ENCODE measurements at regions of chr1 and their contacts with region 1.

Region 1: DNA sequence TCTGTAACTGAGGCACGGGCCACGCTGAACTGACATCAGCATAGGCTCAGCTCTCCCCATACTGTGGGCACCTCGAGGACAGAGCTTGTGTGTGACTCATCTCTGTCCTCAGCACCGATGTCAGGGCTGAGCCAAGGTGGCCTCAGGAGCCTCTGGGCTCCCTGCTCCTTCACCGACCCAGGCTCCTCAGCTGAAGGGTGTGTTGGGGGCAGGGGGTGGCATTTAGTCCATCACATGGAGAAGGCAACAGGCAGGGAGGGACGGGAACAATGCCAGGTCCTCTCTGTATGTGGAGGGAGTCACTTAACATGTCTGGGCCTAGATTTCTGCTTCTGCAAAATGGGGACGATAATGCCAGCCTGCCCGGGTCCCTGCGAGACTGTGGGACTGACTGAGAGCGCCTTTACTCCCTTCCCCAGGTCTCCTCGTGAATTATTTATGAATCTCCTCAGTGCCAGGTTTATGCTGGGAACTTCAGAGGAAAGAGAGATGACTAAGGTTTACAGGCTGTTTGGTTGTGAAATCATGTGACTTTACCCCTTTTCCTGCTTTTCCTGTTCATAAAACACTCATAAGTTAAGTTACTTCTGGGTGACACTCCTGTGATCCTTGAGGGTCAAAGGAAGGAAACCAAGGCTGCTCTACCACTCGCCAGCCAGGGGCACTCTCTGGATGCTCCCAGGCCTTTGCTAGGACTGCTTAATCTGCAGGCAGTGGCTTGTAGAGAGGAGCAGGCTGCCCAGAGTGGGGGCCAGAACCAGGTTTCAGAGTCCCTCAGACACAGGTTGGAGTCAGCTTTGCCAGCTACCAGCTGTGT is 16.2 kb downstream of the TTC39A start:
- DNase-seq: no peak
- ATAC-seq: no peak
- H3K4me3 Mint-ChIP-seq: no peak overlapping the region
- H3K27ac Mint-ChIP-seq: no peak overlapping the region
- H3K4me1 Mint-ChIP-seq: peaks cover 10% of the 10 kb centered on the region
- H3K27me3 Mint-ChIP-seq: no peaks in the 10 kb centered on the region; the same call in 1 of the 2 replicates
- CTCF ChIP-seq: no peak

Region 2: DNA sequence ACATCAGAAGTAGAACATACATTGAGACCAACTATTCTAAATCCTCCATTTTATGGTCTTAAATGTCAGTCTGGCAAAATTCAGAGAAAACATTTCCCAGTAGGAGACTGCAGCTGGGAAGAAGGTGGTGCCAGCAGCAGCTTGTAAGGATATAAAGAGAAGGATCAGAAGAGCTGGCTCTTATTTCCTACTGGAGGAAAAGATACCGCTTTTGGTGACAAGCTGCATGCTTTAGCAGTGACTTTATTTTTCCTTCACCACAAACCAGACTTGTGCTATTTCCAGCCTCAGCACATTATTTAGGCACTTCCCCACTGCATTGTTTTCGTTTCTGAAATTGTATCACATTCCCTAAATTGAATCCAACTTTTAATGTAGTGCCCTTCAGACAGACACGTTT is 49.7 kb before region 1 on chr1:
- CTCF ChIA-PET with region 1: no interaction called
- POLR2A ChIA-PET with region 1: no interaction called
- DNase-seq: no peak
- ATAC-seq: no peak
- H3K4me3 Mint-ChIP-seq: no peak overlapping the region
- H3K27ac Mint-ChIP-seq: peak overlapping the region; percentile 92
- H3K4me1 Mint-ChIP-seq: peaks cover 24% of the 10 kb centered on the region
- H3K27me3 Mint-ChIP-seq: no peaks in the 10 kb centered on the region
- CTCF ChIP-seq: no peak

Region 3: DNA sequence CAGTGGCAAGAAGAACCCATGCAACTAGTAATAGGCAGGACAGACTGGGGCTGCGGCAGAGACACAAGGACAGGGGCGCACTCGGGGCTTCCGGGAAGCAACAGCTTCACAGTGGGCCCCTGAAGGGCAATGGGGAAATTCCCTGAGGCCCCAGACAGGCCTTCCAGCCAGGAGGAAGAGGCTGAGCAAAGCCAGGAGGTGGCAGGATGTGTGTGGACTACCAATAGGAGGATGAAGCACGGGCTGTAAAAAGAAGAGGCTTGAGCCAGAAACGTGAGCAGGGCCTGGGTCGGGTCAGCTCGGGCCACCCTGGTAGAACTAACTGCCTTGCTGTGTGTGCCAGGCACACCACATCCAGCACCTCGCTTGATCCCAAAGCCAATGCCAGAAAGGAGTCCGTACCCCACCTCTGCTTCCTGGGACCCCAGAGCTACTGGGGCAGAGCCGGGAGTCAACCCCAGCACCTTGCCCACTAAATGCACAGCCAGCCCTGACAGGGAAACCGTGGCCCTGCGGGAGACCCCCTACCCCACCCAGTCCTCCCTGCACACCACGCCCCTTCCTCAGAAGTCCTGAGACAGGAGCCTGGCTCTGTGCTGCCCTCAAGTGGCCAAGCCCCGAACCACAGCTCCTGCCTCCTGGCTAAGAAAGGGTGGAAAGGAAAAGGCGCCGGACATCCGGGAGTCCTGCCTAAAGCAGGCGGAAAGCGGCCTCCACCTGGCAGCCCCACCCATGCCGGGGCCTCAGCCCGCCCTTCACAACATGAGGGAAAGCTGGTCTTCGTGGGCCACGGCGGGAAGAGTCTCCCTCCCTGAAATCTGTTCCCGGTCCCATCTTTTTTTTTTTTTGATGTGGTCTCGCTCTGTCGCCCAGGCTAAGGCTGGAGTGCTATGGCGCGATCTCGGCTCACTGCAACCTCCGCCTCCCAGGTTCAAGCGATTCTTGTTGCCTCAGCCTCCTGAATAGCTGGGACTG is 17.5 kb before region 1 on chr1:
- CTCF ChIA-PET with region 1: interaction called, 10 read pairs
- POLR2A ChIA-PET with region 1: no interaction called
- DNase-seq: peak; percentile 95
- ATAC-seq: peak; percentile 89
- H3K4me3 Mint-ChIP-seq: no peak overlapping the region
- H3K27ac Mint-ChIP-seq: no peak overlapping the region
- H3K4me1 Mint-ChIP-seq: peaks cover 13% of the 10 kb centered on the region
- H3K27me3 Mint-ChIP-seq: peaks cover 13% of the 10 kb centered on the region
- CTCF ChIP-seq: peak; percentile 97

Region 4: GRCh38 chr1:51331206-51332100 is 17.3 kb after region 1 on chr1:
- CTCF ChIA-PET with region 1: interaction called, 10 read pairs
- POLR2A ChIA-PET with region 1: no interaction called
- DNase-seq: no peak
- ATAC-seq: peak; percentile 49
- H3K4me3 Mint-ChIP-seq: peak overlapping the region; percentile 93
- H3K27ac Mint-ChIP-seq: peak overlapping the region; percentile 33; the same call in 1 of the 2 replicates
- H3K4me1 Mint-ChIP-seq: peaks cover 13% of the 10 kb centered on the region
- H3K27me3 Mint-ChIP-seq: peaks cover 25% of the 10 kb centered on the region
- CTCF ChIP-seq: no peak

Region 5: GRCh38 chr1:51378871-51379270 is 64.7 kb after region 1 on chr1:
- CTCF ChIA-PET with region 1: no interaction called
- POLR2A ChIA-PET with region 1: no interaction called
- DNase-seq: no peak
- ATAC-seq: no peak
- H3K4me3 Mint-ChIP-seq: no peak overlapping the region
- H3K27ac Mint-ChIP-seq: no peak overlapping the region
- H3K4me1 Mint-ChIP-seq: 0 out of 2 replicates have a peak, but pooled peaks cover 2% of the 10 kb centered on the region
- H3K27me3 Mint-ChIP-seq: no peaks in the 10 kb centered on the region
- CTCF ChIP-seq: no peak